Caco-2 (cell line): ENCODE measurements at regions of chr10 and their contacts with region 1.

Region 1: GRCh38 chr10:380313-380955 is 245.2 kb downstream of the ZMYND11 start:
- DNase-seq: no peak
- H3K4me3 ChIP-seq: no peak overlapping the region
- H3K4me3 Mint-ChIP-seq: no peak overlapping the region
- H3K27ac Mint-ChIP-seq: no peak overlapping the region
- H3K4me1 ChIP-seq: no peaks in the 10 kb centered on the region
- H3K4me1 Mint-ChIP-seq: no peaks in the 10 kb centered on the region
- H3K27me3 ChIP-seq: no peaks in the 10 kb centered on the region
- H3K27me3 Mint-ChIP-seq: no peaks in the 10 kb centered on the region
- CTCF ChIP-seq: no peak

Region 2: GRCh38 chr10:356452-356851 is 24.0 kb before region 1 on chr10:
- CTCF ChIA-PET with region 1: no interaction called
- POLR2A ChIA-PET with region 1: no interaction called
- intact Hi-C with region 1: loop called (anchors 1 kb)
- DNase-seq: peak in 1 of 2 experiments; percentile 30
- H3K4me3 ChIP-seq: no peak overlapping the region
- H3K4me3 Mint-ChIP-seq: no peak overlapping the region
- H3K27ac Mint-ChIP-seq: no peak overlapping the region
- H3K4me1 ChIP-seq: no peaks in the 10 kb centered on the region
- H3K4me1 Mint-ChIP-seq: no peaks in the 10 kb centered on the region
- H3K27me3 ChIP-seq: no peaks in the 10 kb centered on the region
- H3K27me3 Mint-ChIP-seq: no peaks in the 10 kb centered on the region
- CTCF ChIP-seq: no peak